ENCODE measurements at regions of chr7 and their contacts with region 1.

Region 1: DNA sequence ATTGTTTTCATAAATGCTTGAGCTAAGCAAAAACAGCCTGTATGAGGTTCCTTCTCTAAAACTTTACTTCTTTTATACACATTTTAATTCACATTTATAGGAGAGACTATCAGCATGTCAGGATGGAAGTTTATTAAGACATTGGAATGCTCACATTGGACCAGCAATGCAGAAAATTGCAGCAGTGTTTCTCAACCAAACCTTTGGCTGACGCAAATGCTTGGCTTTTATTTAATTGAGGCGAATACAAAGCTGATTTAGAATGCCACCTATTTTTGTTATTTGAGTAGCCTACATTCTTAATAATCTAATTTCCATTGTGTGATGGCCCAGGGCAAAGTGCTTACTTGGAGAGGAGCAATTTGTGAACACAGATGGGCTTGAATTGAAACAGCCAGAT is 283.2 kb downstream of the ARL4A start:
- DNase-seq: no peak
- H3K4me3 ChIP-seq: no peak overlapping the region
- CTCF ChIP-seq: no peak
- POLR2A ChIP-seq: no peak

Region 2: GRCh38 chr7:12314199-12314598 is 656.4 kb before region 1 on chr7:
- intact Hi-C with region 1: loop called (anchors 5 kb)
- DNase-seq: no peak
- H3K4me3 ChIP-seq: no peak overlapping the region
- CTCF ChIP-seq: no peak
- POLR2A ChIP-seq: no peak

Region 3: GRCh38 chr7:12802098-12802497 is 168.5 kb before region 1 on chr7:
- intact Hi-C with region 1: no loop called
- DNase-seq: peak in 1 of 2 donors; percentile 37
- H3K4me3 ChIP-seq: no peak overlapping the region
- CTCF ChIP-seq: no peak
- POLR2A ChIP-seq: no peak

Region 4: DNA sequence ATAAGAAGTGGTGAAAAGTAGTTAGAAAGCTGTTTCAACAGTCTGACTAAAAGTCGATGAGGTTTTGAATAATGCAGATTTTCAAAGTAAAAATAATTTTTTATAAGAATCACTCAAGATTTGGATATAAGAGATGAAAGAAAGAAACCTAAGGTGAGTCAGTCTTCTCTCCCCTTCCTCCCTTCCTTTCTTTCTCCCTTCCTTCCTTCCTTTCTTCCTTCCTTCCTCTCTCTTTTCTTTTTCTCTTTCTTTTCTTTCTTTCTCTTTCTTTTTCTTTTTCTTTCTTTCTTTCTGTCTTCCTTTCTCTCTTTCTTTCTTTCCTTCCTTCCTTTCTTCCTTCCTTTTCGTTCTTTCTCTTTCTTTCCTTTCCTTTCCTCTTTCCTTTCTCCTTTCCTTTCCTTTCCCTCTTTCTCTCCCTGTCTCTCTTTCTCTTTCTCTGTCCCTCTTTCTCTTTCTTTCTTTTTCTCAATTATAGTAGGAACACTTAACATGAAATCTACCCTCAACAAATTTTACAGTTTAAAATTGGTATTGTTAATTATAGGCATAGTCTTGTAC is 25.4 kb after region 1 on chr7:
- intact Hi-C with region 1: no loop called
- DNase-seq: no peak
- H3K4me3 ChIP-seq: no peak overlapping the region
- CTCF ChIP-seq: no peak
- POLR2A ChIP-seq: no peak

Region 5: GRCh38 chr7:13673290-13673689 is 702.7 kb after region 1 on chr7:
- intact Hi-C with region 1: no loop called
- DNase-seq: no peak
- H3K4me3 ChIP-seq: no peak overlapping the region
- CTCF ChIP-seq: no peak
- POLR2A ChIP-seq: no peak

Measured in lower leg skin (tissue), 4 donors.